Lower leg skin (tissue), 4 donors: ENCODE measurements at regions of chr3 and their contacts with region 1.

Region 1: GRCh38 chr3:196274585-196274984 is 12.9 kb downstream of the PCYT1A start:
- DNase-seq: no peak
- H3K4me3 ChIP-seq: no peak overlapping the region
- CTCF ChIP-seq: no peak
- POLR2A ChIP-seq: no peak

Region 2: DNA sequence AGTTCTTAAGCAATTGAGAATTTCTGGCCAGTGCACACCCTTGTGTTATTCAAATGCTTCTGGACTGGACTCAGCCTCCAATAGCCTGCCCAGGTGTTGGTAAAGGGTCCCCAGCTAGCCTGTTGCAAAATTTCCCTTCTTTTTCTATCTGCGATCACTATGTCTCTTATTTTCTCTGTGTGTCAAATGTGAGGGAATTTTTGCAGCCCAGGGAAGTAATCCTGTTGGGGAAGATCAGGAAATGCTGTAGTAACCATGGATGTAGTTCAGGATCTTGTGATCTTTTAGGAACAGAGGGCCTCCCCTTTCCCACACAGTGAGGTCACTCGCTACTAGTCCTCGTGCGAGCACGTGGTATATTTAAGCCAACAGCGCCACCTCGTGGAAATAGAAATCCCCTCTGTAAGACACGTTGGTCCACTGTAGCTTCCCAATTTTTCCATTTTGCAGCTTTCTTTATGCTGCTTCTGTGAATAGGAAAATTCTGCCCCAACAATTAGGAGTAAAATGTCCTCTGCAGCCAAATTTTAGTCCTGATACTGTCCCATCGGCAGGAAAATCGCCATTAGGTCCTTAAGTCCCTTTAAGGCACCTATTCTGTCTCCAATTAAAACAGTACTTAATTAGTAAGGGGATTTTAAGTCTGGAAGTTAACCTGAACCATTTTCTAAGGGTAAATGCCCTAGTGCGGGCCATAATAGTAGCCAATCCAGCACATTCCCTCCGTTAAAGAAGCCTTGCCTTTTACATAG is 244.6 kb after region 1 on chr3:
- intact Hi-C with region 1: loop called (anchors 10 kb)
- DNase-seq: peak; percentile 82 to 92
- H3K4me3 ChIP-seq: no peak overlapping the region
- CTCF ChIP-seq: peak in 1 of 3 donors; percentile 71
- POLR2A ChIP-seq: no peak

Region 3: GRCh38 chr3:198032039-198032936 is 1757.7 kb after region 1 on chr3:
- intact Hi-C with region 1: no loop called
- DNase-seq: no peak
- H3K4me3 ChIP-seq: no peak overlapping the region
- CTCF ChIP-seq: no peak
- POLR2A ChIP-seq: no peak